Heart right ventricle (tissue), 16 donors: ENCODE measurements at regions of chr14 and their contacts with region 1.

Region 1: GRCh38 chr14:61475316-61475715 is 153.9 kb downstream of the PRKCH start:
- DNase-seq: peak in 1 of 2 donors; percentile 40
- ATAC-seq: no peak
- H3K4me3 ChIP-seq: no peak overlapping the region
- H3K27ac ChIP-seq: peak overlapping the region in 8 of 10 donors; percentile 81 to 97 (median 88)
- H3K4me1 ChIP-seq: peaks cover 26 to 100% (median 85%) of the 10 kb centered on the region in 9 donors
- H3K27me3 ChIP-seq: no peaks in the 10 kb centered on the region
- CTCF ChIP-seq: peak; percentile 44 to 82 (median 75)

Region 2: DNA sequence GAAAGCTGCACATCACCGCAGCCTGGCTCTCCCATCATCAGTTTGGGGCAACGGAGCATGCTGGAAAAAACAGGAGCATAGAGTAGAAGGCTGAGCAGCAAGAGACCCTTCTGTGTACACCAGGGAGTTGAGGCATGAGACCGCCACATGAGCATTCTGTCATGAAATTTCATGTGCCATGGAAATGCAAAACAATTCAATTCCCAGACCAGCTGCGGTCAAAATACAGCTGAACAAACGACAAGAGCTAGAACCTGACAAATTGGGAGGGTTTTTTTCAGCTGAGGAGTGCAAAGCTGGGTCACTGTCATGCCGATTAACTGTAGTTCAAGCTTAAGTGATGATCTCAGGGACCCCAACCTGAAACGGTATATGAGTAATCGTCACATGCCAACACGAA is 231.3 kb before region 1 on chr14:
- intact Hi-C with region 1: no loop called
- DNase-seq: no peak
- ATAC-seq: no peak
- H3K4me3 ChIP-seq: no peak overlapping the region
- H3K27ac ChIP-seq: no peak overlapping the region
- H3K4me1 ChIP-seq: no peaks in the 10 kb centered on the region
- H3K27me3 ChIP-seq: peaks cover 0 to 8% (median 0%) of the 10 kb centered on the region in 7 donors
- CTCF ChIP-seq: no peak

Region 3: DNA sequence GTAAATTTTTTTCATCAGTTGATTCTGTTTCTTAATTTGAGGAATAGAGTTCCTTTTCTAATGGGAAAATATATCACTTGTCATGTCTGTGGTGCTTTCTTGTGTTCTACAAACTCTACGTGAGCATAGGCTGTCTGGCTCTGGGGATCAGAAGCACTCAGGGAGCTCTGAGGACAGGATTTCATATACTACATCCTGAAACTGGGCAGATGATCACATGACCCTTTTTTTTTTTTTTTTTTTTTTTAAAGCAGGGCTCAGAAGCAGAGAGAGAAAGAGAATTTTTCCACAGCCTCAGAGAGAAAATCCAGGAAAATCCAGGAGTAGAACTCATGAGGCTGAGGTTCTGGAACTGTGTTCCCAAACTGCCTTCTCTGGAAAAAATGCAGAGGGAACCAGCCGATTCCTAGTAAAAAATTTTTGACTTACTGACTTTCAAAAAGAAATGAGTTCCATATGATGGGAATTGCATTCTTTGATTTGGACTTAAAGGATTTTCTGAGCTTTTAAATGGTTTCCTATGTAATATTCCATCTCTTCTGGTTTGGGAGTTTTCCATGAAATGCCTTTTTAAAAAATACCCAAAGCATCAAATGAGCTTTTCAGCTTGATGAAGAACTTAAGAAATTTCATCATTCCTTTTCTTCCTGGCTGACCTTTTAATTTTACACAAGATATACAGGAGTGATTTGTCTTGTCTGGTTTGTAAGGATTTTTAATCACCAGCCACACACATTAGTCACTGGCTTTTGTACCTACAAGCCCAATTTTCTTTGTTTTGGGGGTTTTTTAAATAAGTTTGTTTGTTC is 36.9 kb after region 1 on chr14:
- intact Hi-C with region 1: loop called in 6 of 10 experiments (anchors 5 kb)
- DNase-seq: no peak
- ATAC-seq: peak in 2 of 8 donors; percentile 36 to 52
- H3K4me3 ChIP-seq: no peak overlapping the region
- H3K27ac ChIP-seq: peak overlapping the region in 4 of 10 donors; percentile 10 to 62 (median 14)
- H3K4me1 ChIP-seq: peaks cover 9 to 84% (median 43%) of the 10 kb centered on the region in 9 donors
- H3K27me3 ChIP-seq: no peaks in the 10 kb centered on the region
- CTCF ChIP-seq: no peak

Region 4: DNA sequence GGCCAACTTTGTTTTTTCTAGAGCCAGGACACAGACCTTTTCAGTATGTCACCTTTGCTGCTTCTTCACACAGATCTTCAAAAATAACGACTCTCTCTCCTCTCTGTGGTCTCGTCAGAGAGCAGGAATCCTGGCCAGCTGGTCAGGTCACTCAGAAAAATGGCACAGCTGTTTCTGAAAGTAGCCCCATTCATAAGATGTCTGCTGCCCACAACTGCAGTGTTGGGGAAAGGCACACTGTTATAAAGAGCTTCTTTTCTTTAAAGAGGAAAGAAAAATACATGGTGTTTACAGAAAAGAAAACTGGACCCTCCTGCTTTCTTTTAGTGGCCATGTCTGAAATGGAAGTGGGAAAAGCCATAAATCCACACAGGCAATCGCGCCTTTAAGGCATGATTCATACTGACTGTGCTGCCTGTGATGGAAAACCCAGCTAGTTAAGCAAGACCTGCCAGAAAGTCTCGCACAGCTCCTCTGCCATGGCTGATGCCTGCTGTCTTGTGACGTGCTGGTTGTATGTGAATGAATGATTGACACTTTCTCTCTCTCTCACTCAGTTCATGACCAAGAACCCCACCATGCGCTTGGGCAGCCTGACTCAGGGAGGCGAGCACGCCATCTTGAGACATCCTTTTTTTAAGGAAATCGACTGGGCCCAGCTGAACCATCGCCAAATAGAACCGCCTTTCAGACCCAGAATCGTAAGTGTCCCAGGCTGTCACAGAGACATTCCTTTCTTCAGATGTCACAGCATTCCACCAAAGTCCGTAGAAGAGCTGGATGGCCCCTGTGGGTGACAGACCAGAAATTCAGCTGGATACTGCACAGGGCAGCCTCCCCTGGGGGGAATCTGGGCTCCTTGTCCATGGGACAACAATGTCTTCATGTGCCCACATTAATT is 72.1 kb after region 1 on chr14:
- intact Hi-C with region 1: loop called in 1 of 10 experiments (anchors 10 kb)
- DNase-seq: no peak
- ATAC-seq: peak in 1 of 8 donors; percentile 44
- H3K4me3 ChIP-seq: no peak overlapping the region
- H3K27ac ChIP-seq: peak overlapping the region in 5 of 10 donors; percentile 1 to 63 (median 14)
- H3K4me1 ChIP-seq: peaks cover 13 to 84% (median 53%) of the 10 kb centered on the region in 9 donors
- H3K27me3 ChIP-seq: no peaks in the 10 kb centered on the region
- CTCF ChIP-seq: no peak

Region 5: GRCh38 chr14:61568572-61569131 is 93.3 kb after region 1 on chr14:
- intact Hi-C with region 1: loop called in 5 of 10 experiments (anchors 5 to 10 kb)
- DNase-seq: peak in 1 of 2 donors; percentile 37
- ATAC-seq: peak; percentile 49 to 84 (median 64)
- H3K4me3 ChIP-seq: peak overlapping the region in 8 of 10 donors; percentile 7 to 44 (median 38)
- H3K27ac ChIP-seq: peak overlapping the region; percentile 50 to 91 (median 77)
- H3K4me1 ChIP-seq: peaks cover 9 to 100% (median 53%) of the 10 kb centered on the region in 9 donors
- H3K27me3 ChIP-seq: no peaks in the 10 kb centered on the region
- CTCF ChIP-seq: peak in 3 of 9 donors; percentile 16 to 24 (median 24)

Region 6: GRCh38 chr14:61694830-61695694 is 219.7 kb after region 1 on chr14 and contains the start of gene HIF1A:
- intact Hi-C with region 1: loop called in 4 of 10 experiments (anchors 2 to 10 kb)
- DNase-seq: peak; percentile 96 to 97
- ATAC-seq: peak; percentile 97 to 99 (median 98)
- H3K4me3 ChIP-seq: peak within 1 kb of the TSS; percentile 70 to 99 (median 88)
- H3K27ac ChIP-seq: peak within 1 kb of the TSS; percentile 72 to 100 (median 96)
- H3K4me1 ChIP-seq: peaks cover 0 to 43% (median 33%) of the 10 kb centered on the region in 9 donors
- H3K27me3 ChIP-seq: no peaks in the 10 kb centered on the region
- CTCF ChIP-seq: peak in 3 of 9 donors; percentile 16 to 24 (median 19)
- total RNA-seq, gene HIF1A: 52.8 to 97.3 (median 62.9) TPM

Region 7: GRCh38 chr14:61730756-61731373 is 255.5 kb after region 1 on chr14:
- intact Hi-C with region 1: loop called in 1 of 10 experiments (anchors 2 kb)
- DNase-seq: no peak
- ATAC-seq: peak in 3 of 8 donors; percentile 21 to 39 (median 29)
- H3K4me3 ChIP-seq: no peak overlapping the region
- H3K27ac ChIP-seq: peak overlapping the region in 4 of 10 donors; percentile 37 to 48 (median 40)
- H3K4me1 ChIP-seq: peaks cover 0 to 31% (median 9%) of the 10 kb centered on the region in 9 donors
- H3K27me3 ChIP-seq: no peaks in the 10 kb centered on the region
- CTCF ChIP-seq: peak in 8 of 9 donors; percentile 17 to 73 (median 60)